ENCODE measurements at regions of chr17 and their contacts with region 1.

Region 1: GRCh38 chr17:45228763-45229539 is 7.3 kb downstream of the FMNL1 start:
- DNase-seq: peak; percentile 83
- ATAC-seq: peak; percentile 41
- H3K4me3 Mint-ChIP-seq: peak overlapping the region; percentile 100
- H3K27ac Mint-ChIP-seq: peak overlapping the region; percentile 94
- H3K4me1 Mint-ChIP-seq: peaks cover 93% of the 10 kb centered on the region
- H3K27me3 Mint-ChIP-seq: no peaks in the 10 kb centered on the region

Region 2: GRCh38 chr17:45115871-45116724 is 112.9 kb before region 1 on chr17:
- CTCF ChIA-PET with region 1: no interaction called
- POLR2A ChIA-PET with region 1: no interaction called
- DNase-seq: no peak
- ATAC-seq: no peak
- H3K4me3 Mint-ChIP-seq: no peak overlapping the region
- H3K27ac Mint-ChIP-seq: no peak overlapping the region
- H3K4me1 Mint-ChIP-seq: no peaks in the 10 kb centered on the region
- H3K27me3 Mint-ChIP-seq: peaks cover 3% of the 10 kb centered on the region

Region 3: GRCh38 chr17:45256114-45256966 is 27.4 kb after region 1 on chr17:
- CTCF ChIA-PET with region 1: interaction called, 13 read pairs
- POLR2A ChIA-PET with region 1: interaction called, 3 read pairs
- DNase-seq: peak; percentile 35
- ATAC-seq: peak; percentile 58
- H3K4me3 Mint-ChIP-seq: peak overlapping the region; percentile 45
- H3K27ac Mint-ChIP-seq: peak overlapping the region; percentile 78
- H3K4me1 Mint-ChIP-seq: peaks cover 65% of the 10 kb centered on the region
- H3K27me3 Mint-ChIP-seq: no peaks in the 10 kb centered on the region

Region 4: GRCh38 chr17:45385331-45385997 is 156.5 kb after region 1 on chr17:
- CTCF ChIA-PET with region 1: interaction called, 10 read pairs
- POLR2A ChIA-PET with region 1: interaction called, 6 read pairs
- DNase-seq: peak; percentile 93
- ATAC-seq: peak; percentile 95
- H3K4me3 Mint-ChIP-seq: no peak overlapping the region
- H3K27ac Mint-ChIP-seq: peak overlapping the region; percentile 74
- H3K4me1 Mint-ChIP-seq: peaks cover 33% of the 10 kb centered on the region
- H3K27me3 Mint-ChIP-seq: peaks cover 5% of the 10 kb centered on the region

Region 5: GRCh38 chr17:46072998-46073397 is 844.0 kb after region 1 on chr17:
- CTCF ChIA-PET with region 1: no interaction called
- POLR2A ChIA-PET with region 1: no interaction called
- DNase-seq: no peak
- ATAC-seq: no peak
- H3K4me3 Mint-ChIP-seq: no peak overlapping the region
- H3K27ac Mint-ChIP-seq: no peak overlapping the region
- H3K4me1 Mint-ChIP-seq: no peaks in the 10 kb centered on the region
- H3K27me3 Mint-ChIP-seq: no peaks in the 10 kb centered on the region

Measured in activated CD8-positive, alpha-beta T cell treated with anti-CD3 and anti-CD28 coated beads, Interleukin-2, amount 10 ng/mL, durations not matched to agents 7 days and 5 days (primary cell).